ENCODE measurements at regions of chr10 and their contacts with region 1.

Region 1: GRCh38 chr10:32795598-32796183 is 162.3 kb downstream of the ITGB1 start:
- DNase-seq: peak; percentile 73
- ATAC-seq: peak; percentile 73
- H3K4me3 ChIP-seq: no peak overlapping the region
- H3K27ac ChIP-seq: no peak overlapping the region
- H3K4me1 ChIP-seq: no peaks in the 10 kb centered on the region
- H3K27me3 ChIP-seq: no peaks in the 10 kb centered on the region
- CTCF ChIP-seq: peak; percentile 99

Region 2: DNA sequence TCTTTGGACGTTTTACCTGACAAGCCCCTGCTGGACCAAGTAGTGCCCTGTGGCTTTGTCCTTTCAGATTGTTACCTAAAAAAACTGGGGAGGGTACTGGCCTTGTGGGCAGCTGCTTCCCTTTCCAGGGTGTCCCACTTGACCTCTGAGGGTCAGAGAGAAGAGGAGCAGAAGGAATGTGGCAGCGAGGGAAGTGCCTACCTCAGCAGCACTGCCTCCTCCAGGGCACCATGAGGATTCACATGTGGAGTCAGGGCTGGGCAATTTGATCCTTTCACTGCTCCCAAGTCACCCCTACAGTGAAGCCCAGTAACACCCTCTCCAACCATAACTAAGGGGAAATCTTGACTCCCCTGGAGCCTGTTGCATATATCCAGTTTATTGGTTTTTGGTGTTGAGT is 97.7 kb after region 1 on chr10:
- CTCF ChIA-PET with region 1: no interaction called
- POLR2A ChIA-PET with region 1: no interaction called
- intact Hi-C with region 1: loop called (anchors 2 kb)
- DNase-seq: peak; percentile 32
- ATAC-seq: peak; percentile 42; the same call in 1 of the 2 replicates
- H3K4me3 ChIP-seq: no peak overlapping the region
- H3K27ac ChIP-seq: no peak overlapping the region
- H3K4me1 ChIP-seq: no peaks in the 10 kb centered on the region
- H3K27me3 ChIP-seq: no peaks in the 10 kb centered on the region
- CTCF ChIP-seq: peak; percentile 55

Region 3: GRCh38 chr10:32938554-32939061 is 142.9 kb after region 1 on chr10:
- CTCF ChIA-PET with region 1: no interaction called
- POLR2A ChIA-PET with region 1: no interaction called
- intact Hi-C with region 1: no loop called
- DNase-seq: no peak
- ATAC-seq: no peak
- H3K4me3 ChIP-seq: no peak overlapping the region
- H3K27ac ChIP-seq: no peak overlapping the region
- H3K4me1 ChIP-seq: peaks cover 50% of the 10 kb centered on the region
- H3K27me3 ChIP-seq: no peaks in the 10 kb centered on the region
- CTCF ChIP-seq: no peak

Region 4: DNA sequence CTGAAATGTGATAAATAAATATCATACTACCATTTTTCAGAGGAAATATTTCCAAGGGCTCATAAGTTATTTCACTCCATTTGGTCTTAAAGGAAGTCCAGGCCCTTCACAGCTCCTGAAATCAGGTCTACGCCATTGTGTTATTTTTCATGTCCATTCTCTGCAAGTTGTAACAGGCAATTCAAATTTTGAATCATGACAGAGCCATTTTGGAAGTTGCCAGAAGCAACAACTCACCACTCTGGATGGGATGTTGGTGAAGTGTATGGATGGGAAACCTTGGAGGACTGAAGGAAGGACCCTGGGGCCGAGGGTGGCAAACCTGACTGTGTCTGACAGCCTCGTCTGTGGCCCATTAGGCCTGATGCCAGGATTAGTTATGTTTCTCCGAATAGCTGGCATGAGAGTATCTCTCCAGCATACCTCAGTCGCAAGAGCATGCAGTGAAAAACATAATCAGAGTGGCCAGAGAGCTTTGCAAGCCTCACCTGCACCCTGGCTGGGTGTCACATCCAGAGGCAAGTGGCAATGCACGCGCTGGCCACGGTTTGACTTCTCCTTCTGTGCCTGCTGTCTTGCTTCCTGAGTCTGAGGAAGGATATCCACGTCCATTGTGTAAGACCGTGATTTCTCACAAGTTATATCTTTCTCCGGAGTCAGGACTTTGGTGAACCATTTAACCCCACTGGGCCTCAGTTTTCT is 451.7 kb after region 1 on chr10:
- CTCF ChIA-PET with region 1: no interaction called
- POLR2A ChIA-PET with region 1: no interaction called
- intact Hi-C with region 1: no loop called
- DNase-seq: no peak
- ATAC-seq: no peak
- H3K4me3 ChIP-seq: no peak overlapping the region
- H3K27ac ChIP-seq: peak overlapping the region; percentile 65
- H3K4me1 ChIP-seq: peaks cover 42% of the 10 kb centered on the region
- H3K27me3 ChIP-seq: no peaks in the 10 kb centered on the region
- CTCF ChIP-seq: no peak